CD4-positive, alpha-beta T cell (primary cell): ENCODE measurements at regions of chr1 and their contacts with region 1.

Region 1: DNA sequence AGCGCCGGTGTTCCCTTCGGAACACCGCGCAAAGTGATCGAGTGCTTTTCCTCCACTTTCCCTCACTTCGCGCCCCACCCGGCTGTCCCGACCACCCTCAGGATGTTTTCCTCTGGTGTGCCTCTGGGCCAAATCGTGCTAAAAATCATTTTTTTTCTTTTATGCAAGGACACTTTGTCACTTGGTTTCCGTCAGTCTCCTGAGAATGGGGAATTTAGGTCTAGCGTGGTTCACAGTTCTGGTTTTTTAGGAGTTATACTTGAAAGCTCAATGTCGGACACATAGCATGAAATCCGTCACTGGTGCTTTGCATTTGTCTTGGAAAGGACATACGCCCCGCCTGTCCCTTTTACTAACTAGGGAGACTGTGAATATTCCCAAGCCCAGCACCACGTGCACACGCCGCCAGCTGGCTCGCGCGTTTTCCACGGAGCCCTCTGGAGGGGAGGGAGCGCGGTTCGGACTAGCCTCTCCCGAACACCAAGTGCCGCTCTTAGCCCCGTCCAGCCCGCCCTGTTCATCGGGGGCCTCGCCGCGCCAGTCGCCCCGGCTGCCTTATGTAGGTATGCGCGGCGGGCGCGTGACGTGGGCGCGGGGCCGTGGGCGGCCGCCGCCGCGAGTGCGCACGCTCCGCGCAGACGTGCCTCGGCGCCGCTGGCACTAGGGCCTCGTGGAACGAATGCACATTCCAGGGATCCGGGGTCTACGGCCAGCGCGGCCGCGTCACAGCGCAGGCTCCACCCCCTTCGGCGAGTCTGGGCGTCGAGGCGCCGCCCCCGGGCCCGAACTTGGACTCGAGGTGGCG is 572 bp upstream of the IRF2BP2 start:
- DNase-seq: peak; percentile 75 to 97 (median 86)
- ATAC-seq: peak; percentile 40
- H3K4me3 ChIP-seq: peak overlapping the region; percentile 68
- H3K4me3 Mint-ChIP-seq: peak overlapping the region; percentile 99
- H3K27ac ChIP-seq: peak overlapping the region; percentile 93 to 99
- H3K27ac Mint-ChIP-seq: peak overlapping the region; percentile 99
- H3K4me1 ChIP-seq: peaks cover 48% of the 10 kb centered on the region
- H3K4me1 Mint-ChIP-seq: peaks cover 61% of the 10 kb centered on the region
- H3K27me3 ChIP-seq: no peaks in the 10 kb centered on the region
- H3K27me3 Mint-ChIP-seq: peaks cover 10% of the 10 kb centered on the region
- CTCF ChIP-seq: no peak

Region 2: GRCh38 chr1:234478481-234479309 is 131.9 kb before region 1 on chr1 and contains the start of gene TARBP1:
- CTCF ChIA-PET with region 1: no interaction called
- POLR2A ChIA-PET with region 1: interaction called, 43 read pairs
- intact Hi-C with region 1: loop called in 1 of 2 experiments (anchors 5 kb)
- DNase-seq: peak; percentile 46 to 92 (median 68)
- ATAC-seq: peak; percentile 69
- H3K4me3 ChIP-seq: peak within 1 kb of the TSS; percentile 64
- H3K4me3 Mint-ChIP-seq: peak within 1 kb of the TSS; percentile 90
- H3K27ac ChIP-seq: peak within 1 kb of the TSS in 1 of 2 donors; percentile 50
- H3K27ac Mint-ChIP-seq: peak within 1 kb of the TSS; percentile 92
- H3K4me1 ChIP-seq: peaks cover 19% of the 10 kb centered on the region
- H3K4me1 Mint-ChIP-seq: peaks cover 44% of the 10 kb centered on the region
- H3K27me3 ChIP-seq: no peaks in the 10 kb centered on the region
- H3K27me3 Mint-ChIP-seq: no peaks in the 10 kb centered on the region
- CTCF ChIP-seq: no peak
- total RNA-seq, gene TARBP1: 38.4 to 40.9 TPM

Region 3: GRCh38 chr1:234656856-234657654 is 46.5 kb after region 1 on chr1:
- CTCF ChIA-PET with region 1: no interaction called
- POLR2A ChIA-PET with region 1: interaction called, 12 read pairs
- intact Hi-C with region 1: no loop called
- DNase-seq: peak in 3 of 14 experiments; percentile 32 to 76 (median 63)
- ATAC-seq: peak; percentile 14
- H3K4me3 ChIP-seq: no peak overlapping the region
- H3K4me3 Mint-ChIP-seq: no peak overlapping the region
- H3K27ac ChIP-seq: no peak overlapping the region
- H3K27ac Mint-ChIP-seq: no peak overlapping the region
- H3K4me1 ChIP-seq: no peaks in the 10 kb centered on the region
- H3K4me1 Mint-ChIP-seq: no peaks in the 10 kb centered on the region
- H3K27me3 ChIP-seq: no peaks in the 10 kb centered on the region
- H3K27me3 Mint-ChIP-seq: no peaks in the 10 kb centered on the region
- CTCF ChIP-seq: no peak

Region 4: GRCh38 chr1:234722904-234723720 is 112.6 kb after region 1 on chr1:
- CTCF ChIA-PET with region 1: interaction called, 17 read pairs
- POLR2A ChIA-PET with region 1: interaction called, 238 read pairs
- intact Hi-C with region 1: loop called (anchors 1 to 2 kb)
- DNase-seq: peak in 13 of 14 experiments; percentile 23 to 81 (median 51)
- ATAC-seq: peak; percentile 9
- H3K4me3 ChIP-seq: peak overlapping the region; percentile 33
- H3K4me3 Mint-ChIP-seq: peak overlapping the region; percentile 76
- H3K27ac ChIP-seq: peak overlapping the region; percentile 94 to 98
- H3K27ac Mint-ChIP-seq: peak overlapping the region; percentile 93
- H3K4me1 ChIP-seq: peaks cover 56% of the 10 kb centered on the region
- H3K4me1 Mint-ChIP-seq: peaks cover 93% of the 10 kb centered on the region
- H3K27me3 ChIP-seq: no peaks in the 10 kb centered on the region
- H3K27me3 Mint-ChIP-seq: no peaks in the 10 kb centered on the region
- CTCF ChIP-seq: no peak

Region 5: GRCh38 chr1:234772345-234773147 is 162.0 kb after region 1 on chr1:
- CTCF ChIA-PET with region 1: interaction called, 3 read pairs
- POLR2A ChIA-PET with region 1: interaction called, 67 read pairs
- intact Hi-C with region 1: loop called in 1 of 2 experiments (anchors 1 kb)
- DNase-seq: peak; percentile 56 to 95 (median 78)
- ATAC-seq: peak; percentile 82
- H3K4me3 ChIP-seq: peak overlapping the region; percentile 21
- H3K4me3 Mint-ChIP-seq: peak overlapping the region; percentile 42
- H3K27ac ChIP-seq: peak overlapping the region; percentile 59 to 72
- H3K27ac Mint-ChIP-seq: peak overlapping the region; percentile 87
- H3K4me1 ChIP-seq: peaks cover 53% of the 10 kb centered on the region
- H3K4me1 Mint-ChIP-seq: peaks cover 56% of the 10 kb centered on the region
- H3K27me3 ChIP-seq: peaks cover 4 to 12% of the 10 kb centered on the region in 2 experiments
- H3K27me3 Mint-ChIP-seq: no peaks in the 10 kb centered on the region
- CTCF ChIP-seq: no peak

Region 6: DNA sequence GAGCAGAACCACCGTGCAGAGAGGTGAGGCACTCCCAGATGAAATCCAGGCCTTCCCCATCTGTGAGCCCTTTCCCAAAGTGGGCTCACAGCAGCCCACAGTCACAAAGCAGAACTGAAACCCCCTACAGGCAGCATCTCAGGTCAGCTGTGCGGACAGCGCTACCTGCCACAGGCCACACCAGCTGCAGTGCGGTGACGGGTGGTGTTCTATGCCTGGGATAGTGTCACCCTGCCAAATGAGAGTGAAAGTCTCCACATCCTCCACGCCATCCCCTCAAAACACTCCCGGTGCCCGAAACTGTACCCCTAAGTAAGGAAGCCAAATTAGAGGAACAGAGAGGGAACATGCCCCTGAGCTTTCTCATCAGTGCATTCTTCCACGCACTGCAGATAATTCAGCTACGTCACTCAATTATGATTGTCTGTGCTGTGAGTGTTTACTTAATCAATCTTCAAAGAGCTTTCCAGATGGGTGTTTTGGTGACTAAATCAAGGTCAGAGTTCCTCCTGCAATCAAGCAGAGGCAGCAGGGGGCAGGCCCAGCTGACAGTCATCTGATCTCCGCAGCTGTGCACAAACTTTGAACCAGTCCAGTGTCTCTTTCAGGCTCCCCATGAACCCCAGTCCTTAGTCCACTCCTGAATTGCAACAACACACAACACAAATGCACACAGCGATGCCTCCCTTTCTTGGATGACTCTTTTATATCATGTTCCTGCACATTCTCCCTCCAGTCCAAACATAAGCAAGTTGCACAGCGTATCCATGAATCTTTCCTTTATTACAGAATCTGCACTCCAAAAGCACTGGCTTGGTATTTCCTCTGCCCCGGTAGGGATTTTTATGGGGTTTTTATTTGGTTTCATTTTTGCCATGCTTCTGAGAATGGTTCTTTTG is 368.1 kb after region 1 on chr1:
- CTCF ChIA-PET with region 1: interaction called, 5 read pairs
- POLR2A ChIA-PET with region 1: interaction called, 19 read pairs
- intact Hi-C with region 1: loop called in 1 of 2 experiments (anchors 5 kb)
- DNase-seq: peak in 13 of 14 experiments; percentile 30 to 89 (median 55)
- ATAC-seq: peak; percentile 79
- H3K4me3 ChIP-seq: no peak overlapping the region
- H3K4me3 Mint-ChIP-seq: peak overlapping the region; percentile 82
- H3K27ac ChIP-seq: peak overlapping the region; percentile 63 to 72
- H3K27ac Mint-ChIP-seq: peak overlapping the region; percentile 93
- H3K4me1 ChIP-seq: peaks cover 53% of the 10 kb centered on the region
- H3K4me1 Mint-ChIP-seq: peaks cover 65% of the 10 kb centered on the region
- H3K27me3 ChIP-seq: no peaks in the 10 kb centered on the region
- H3K27me3 Mint-ChIP-seq: no peaks in the 10 kb centered on the region
- CTCF ChIP-seq: peak; percentile 18

Region 7: DNA sequence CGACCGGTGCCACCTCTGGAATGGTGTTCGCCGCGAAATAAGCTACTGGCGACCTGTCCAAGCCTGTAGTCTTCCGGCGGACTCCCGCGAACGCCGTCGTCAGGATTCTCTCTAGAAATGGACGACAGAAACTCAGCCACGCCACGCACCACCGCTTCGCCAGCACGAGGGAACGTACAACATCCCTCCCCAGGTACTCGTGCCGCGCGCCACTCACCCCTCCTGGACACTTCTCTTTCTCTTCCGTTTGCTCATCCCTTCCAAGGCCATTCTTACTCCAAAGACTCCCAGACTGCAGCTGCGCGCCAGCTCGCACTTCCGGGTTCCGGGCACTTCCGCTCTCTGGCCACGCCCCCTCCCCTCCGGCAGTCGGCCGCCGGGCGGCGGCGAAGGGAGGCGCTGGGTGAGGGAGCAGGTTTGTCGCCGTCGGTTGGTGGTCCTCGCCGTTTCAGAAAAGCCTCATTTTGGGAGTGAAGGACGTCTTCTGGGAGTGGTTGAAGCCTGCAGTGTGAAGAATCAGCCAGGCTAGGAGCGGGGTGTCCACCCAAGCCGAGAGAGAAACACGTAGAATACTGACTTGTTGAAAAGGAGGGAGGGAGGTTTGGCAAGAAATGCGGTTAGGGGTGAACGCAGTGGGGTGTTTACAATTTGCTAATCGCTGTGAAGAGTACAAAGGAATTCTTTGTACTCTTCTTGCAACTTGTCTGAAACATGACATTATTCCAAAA is 550.6 kb after region 1 on chr1 and contains the start of gene RBM34:
- CTCF ChIA-PET with region 1: no interaction called
- POLR2A ChIA-PET with region 1: interaction called, 20 read pairs
- intact Hi-C with region 1: no loop called
- DNase-seq: peak; percentile 86 to 96 (median 90)
- ATAC-seq: peak; percentile 84
- H3K4me3 ChIP-seq: peak within 1 kb of the TSS; percentile 75
- H3K4me3 Mint-ChIP-seq: peak within 1 kb of the TSS; percentile 95
- H3K27ac ChIP-seq: peak within 1 kb of the TSS; percentile 82 to 88
- H3K27ac Mint-ChIP-seq: peak within 1 kb of the TSS; percentile 97
- H3K4me1 ChIP-seq: peaks cover 43% of the 10 kb centered on the region
- H3K4me1 Mint-ChIP-seq: peaks cover 26% of the 10 kb centered on the region
- H3K27me3 ChIP-seq: no peaks in the 10 kb centered on the region
- H3K27me3 Mint-ChIP-seq: no peaks in the 10 kb centered on the region
- CTCF ChIP-seq: no peak
- total RNA-seq, gene RBM34: 195 to 218 TPM